PC-9 (cell line): ENCODE measurements at regions of chr4 and their contacts with region 1.

Region 1: GRCh38 chr4:138035781-138036258 is 206.3 kb downstream of the SLC7A11 start:
- DNase-seq: peak in 1 of 2 experiments; percentile 29
- H3K4me3 ChIP-seq: no peak overlapping the region
- H3K27ac ChIP-seq: no peak overlapping the region
- H3K4me1 ChIP-seq: peaks cover 11% of the 10 kb centered on the region
- H3K27me3 ChIP-seq: no peaks in the 10 kb centered on the region
- CTCF ChIP-seq: peak; percentile 68

Region 2: DNA sequence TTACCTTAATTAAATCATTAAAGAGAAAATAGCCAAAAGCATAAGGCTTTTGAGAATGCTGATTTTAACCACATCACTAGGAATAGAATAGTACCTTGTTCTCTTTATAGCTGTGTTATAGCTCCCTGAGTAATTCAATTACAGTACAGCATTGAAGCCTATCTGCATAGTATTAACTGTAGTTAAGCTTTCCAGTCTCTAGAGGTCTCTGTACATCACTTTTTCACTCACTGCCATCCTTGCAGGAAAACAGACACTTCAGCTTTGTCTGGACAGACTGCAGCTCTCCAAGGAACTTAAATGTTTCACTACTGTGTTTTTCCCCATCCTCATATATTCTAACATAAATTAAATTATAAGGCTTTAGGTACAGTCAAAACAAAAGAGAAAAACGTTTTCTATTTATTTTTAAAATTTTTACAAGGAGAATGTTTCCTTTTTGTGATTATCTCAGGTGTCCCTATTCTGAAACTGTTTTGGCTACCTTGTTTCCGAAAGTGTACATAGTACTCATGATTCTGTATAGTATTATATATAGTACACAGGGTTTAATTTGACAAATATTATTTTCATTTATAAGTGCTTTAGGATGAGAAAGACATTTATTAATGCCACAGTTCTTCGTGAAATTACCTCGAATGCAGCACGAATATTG is 911.4 kb before region 1 on chr4:
- CTCF ChIA-PET with region 1: no interaction called
- POLR2A ChIA-PET with region 1: no interaction called
- intact Hi-C with region 1: loop called (anchors 10 kb)
- DNase-seq: peak; percentile 1 to 36
- H3K4me3 ChIP-seq: peak overlapping the region; percentile 56; the same call in 1 of the 2 replicates
- H3K27ac ChIP-seq: no peak overlapping the region
- H3K4me1 ChIP-seq: no peaks in the 10 kb centered on the region
- H3K27me3 ChIP-seq: no peaks in the 10 kb centered on the region
- CTCF ChIP-seq: peak; percentile 62

Region 3: GRCh38 chr4:138090150-138090917 is 54.5 kb after region 1 on chr4:
- CTCF ChIA-PET with region 1: interaction called, 17 read pairs
- POLR2A ChIA-PET with region 1: no interaction called
- intact Hi-C with region 1: loop called (anchors 1 kb)
- DNase-seq: peak; percentile 60 to 61
- H3K4me3 ChIP-seq: peak overlapping the region; percentile 36; the same call in 1 of the 2 replicates
- H3K27ac ChIP-seq: no peak overlapping the region
- H3K4me1 ChIP-seq: no peaks in the 10 kb centered on the region
- H3K27me3 ChIP-seq: no peaks in the 10 kb centered on the region
- CTCF ChIP-seq: peak; percentile 79

Region 4: GRCh38 chr4:138182838-138183426 is 147.1 kb after region 1 on chr4:
- CTCF ChIA-PET with region 1: no interaction called
- POLR2A ChIA-PET with region 1: no interaction called
- intact Hi-C with region 1: loop called (anchors 5 kb)
- DNase-seq: no peak
- H3K4me3 ChIP-seq: no peak overlapping the region
- H3K27ac ChIP-seq: no peak overlapping the region
- H3K4me1 ChIP-seq: no peaks in the 10 kb centered on the region
- H3K27me3 ChIP-seq: no peaks in the 10 kb centered on the region
- CTCF ChIP-seq: peak; percentile 57

Region 5: DNA sequence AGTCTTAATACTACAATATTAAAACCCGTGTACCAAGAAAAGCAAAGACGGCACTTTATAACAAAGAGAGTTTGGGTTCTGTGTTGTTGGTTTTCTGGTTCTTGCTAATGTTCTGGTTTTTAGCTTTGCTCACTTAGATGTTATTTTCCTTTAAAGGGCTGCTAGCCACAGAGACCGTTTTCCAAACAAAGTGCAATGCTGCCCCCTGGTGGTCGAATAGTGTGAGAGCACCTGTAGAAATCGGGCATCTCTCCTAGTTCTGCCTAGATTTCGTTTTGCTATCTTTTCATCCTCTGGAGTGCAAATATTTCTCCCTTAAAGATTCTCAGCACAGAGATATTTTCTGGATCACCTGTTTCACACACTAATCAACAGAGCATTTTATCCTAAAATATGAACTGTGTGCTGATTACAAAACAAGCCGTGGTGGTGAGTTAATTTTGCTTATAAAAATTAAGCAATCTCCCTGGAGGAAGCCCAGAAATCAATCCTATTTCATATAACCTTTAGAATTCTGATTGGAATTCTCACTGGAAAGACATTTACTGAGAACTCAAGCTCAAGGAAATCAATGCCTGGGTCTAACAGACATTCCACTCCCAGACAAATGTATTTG is 645.3 kb after region 1 on chr4:
- CTCF ChIA-PET with region 1: interaction called, 10 read pairs
- POLR2A ChIA-PET with region 1: no interaction called
- intact Hi-C with region 1: loop called (anchors 1 kb)
- DNase-seq: peak in 1 of 2 experiments; percentile 60
- H3K4me3 ChIP-seq: no peak overlapping the region
- H3K27ac ChIP-seq: no peak overlapping the region
- H3K4me1 ChIP-seq: no peaks in the 10 kb centered on the region
- H3K27me3 ChIP-seq: no peaks in the 10 kb centered on the region
- CTCF ChIP-seq: peak; percentile 83

Region 6: DNA sequence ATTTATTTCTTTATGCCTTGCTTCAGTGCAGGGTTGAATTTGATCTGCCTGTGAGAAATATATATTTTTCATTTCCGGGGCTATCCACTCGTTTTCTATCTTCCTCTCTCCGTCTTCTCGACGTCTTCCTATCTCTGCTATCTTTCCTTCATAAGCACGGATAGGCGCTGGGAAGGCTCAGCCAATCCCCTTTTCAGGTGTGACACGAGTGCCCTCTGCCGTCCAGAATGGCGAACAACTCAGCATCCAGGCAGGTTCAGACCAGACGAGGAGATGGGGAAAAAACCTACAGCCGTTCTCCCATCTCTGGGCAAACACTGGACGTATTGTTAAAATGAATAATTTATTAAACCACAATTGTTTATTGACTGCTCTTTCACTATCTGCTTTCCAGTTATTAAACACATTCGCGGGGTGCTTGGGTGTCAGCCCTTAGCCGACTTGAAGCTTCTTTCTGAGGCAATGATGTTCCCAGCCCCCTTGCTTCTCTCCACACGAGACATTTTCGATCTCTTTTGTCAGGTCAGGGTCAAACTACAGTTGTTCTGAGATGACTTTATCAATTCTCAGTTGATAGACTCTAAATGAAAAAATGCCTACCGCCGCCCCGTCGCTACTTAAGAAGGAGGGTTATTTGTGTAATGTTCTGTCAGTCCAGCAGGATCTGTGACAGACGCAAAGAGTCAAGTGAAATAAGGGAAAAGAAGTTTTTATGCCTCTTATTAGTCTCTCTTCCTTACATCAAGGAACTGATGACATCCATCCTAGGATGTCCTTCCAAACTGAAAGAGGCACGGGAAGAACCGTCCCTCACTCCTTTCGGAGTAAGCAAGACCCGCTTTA is 883.5 kb after region 1 on chr4:
- CTCF ChIA-PET with region 1: no interaction called
- POLR2A ChIA-PET with region 1: no interaction called
- intact Hi-C with region 1: loop called (anchors 1 kb)
- DNase-seq: peak; percentile 44 to 77
- H3K4me3 ChIP-seq: no peak overlapping the region
- H3K27ac ChIP-seq: no peak overlapping the region
- H3K4me1 ChIP-seq: no peaks in the 10 kb centered on the region
- H3K27me3 ChIP-seq: no peaks in the 10 kb centered on the region
- CTCF ChIP-seq: peak; percentile 69